MCF 10A (cell line): ENCODE measurements at regions of chr13 and their contacts with region 1.

Region 1: DNA sequence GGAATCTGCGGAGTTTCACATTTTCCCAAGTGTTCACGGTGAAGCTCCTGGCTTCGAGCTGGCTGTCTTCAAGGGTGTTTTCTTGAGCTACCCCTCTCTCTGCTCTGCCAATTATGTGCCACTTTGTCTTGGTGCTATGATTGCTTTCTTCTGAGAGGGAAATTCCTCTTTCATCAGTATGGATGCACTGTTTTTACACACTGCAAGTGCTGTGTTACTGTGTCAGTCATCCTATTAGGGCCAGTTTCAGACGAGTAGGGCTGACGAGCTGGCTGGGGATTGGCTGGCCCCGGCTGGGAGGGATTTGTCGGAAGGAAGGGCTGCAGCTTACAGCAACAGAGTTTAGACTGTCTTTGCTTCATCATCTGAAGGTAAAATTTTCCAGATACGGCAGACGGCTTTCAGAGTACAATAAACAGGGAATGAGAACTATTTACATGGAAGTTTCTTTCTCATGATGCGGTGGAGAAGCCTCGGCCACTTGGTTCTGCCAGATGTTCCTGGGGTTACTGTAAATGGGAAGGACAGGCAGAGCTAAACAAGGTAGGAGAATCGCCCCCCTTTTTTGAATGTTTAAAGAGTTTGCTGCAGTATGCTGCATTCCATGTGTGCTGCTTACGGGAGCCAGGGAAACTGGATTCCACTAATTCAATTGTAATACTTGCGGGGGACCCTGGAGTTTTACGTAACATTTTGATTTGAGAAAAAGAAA is at the start of gene MBNL2:
- DNase-seq: peak; percentile 97
- H3K4me3 Mint-ChIP-seq: peak within 1 kb of the TSS; percentile 91
- H3K27ac Mint-ChIP-seq: peak within 1 kb of the TSS; percentile 94
- H3K4me1 Mint-ChIP-seq: peaks cover 29% of the 10 kb centered on the region
- H3K27me3 Mint-ChIP-seq: no peaks in the 10 kb centered on the region
- CTCF ChIP-seq: no peak
- total RNA-seq, gene MBNL2: 74.3 and 85.8 TPM in 2 replicates

Region 2: DNA sequence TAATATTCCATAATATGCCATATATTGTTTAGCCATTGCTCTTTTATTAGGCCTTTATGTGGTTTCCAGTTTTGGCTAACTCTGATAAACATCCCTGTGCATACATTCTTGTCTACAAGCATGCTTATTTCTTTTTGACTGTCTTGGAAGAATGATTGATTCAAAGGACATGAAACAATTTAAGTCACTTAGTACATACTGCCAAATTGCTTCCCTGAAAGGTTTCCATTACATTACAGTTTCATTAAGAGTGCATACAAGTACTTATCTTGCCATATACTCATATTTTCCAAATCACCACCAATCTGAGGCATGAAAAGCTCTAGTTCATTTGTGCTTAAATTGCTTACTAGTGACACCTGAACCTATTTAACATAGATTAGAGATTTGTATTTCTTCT is 341.7 kb before region 1 on chr13:
- CTCF ChIA-PET with region 1: no interaction called
- POLR2A ChIA-PET with region 1: no interaction called
- intact Hi-C with region 1: no loop called
- DNase-seq: no peak
- H3K4me3 Mint-ChIP-seq: no peak overlapping the region
- H3K27ac Mint-ChIP-seq: no peak overlapping the region
- H3K4me1 Mint-ChIP-seq: no peaks in the 10 kb centered on the region
- H3K27me3 Mint-ChIP-seq: no peaks in the 10 kb centered on the region
- CTCF ChIP-seq: no peak

Region 3: DNA sequence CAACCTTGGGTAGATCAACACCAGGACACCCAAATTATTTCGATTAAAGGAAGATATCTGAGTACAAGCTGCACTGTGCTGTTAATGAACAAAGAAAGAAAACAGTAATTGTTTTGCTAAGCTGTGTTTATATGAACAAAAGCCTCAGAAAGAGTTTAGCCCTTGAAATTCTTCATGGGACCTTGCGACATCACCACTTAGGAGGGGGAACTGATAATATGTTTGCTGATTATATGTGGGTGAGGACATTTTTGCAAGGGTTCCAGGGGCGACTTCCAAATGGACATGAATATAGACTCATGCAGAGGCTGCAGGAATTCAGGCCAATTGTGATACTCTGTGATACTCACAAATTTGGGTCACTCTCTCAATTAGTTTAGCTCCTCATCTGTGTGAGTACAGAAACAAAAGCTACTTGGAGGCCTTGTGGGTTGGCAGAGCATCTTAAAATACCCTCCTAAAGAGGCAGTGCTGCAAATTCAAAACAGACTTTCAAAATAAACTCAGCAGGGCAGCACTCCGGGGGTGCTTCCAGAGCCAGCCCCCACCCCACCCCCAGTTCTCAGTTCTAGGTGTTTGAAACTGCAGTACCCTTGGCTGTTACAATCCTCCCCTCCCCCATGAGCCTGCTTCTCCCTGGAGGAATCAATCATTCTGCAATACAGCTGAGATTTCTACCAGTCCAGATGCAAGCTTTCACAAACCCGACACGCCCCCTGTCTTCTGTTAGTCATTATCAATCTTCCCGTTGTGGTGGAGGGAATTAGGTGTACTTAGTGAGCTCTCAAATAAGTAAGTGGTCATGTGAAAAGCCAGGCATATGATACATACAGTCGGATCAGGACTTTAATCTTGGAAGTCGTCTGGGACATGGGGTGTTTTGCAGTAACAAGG is 97.0 kb before region 1 on chr13:
- CTCF ChIA-PET with region 1: interaction called, 7 read pairs
- POLR2A ChIA-PET with region 1: interaction called, 58 read pairs
- intact Hi-C with region 1: no loop called
- DNase-seq: peak; percentile 89
- H3K4me3 Mint-ChIP-seq: peak overlapping the region; percentile 28
- H3K27ac Mint-ChIP-seq: peak overlapping the region; percentile 21
- H3K4me1 Mint-ChIP-seq: peaks cover 47% of the 10 kb centered on the region
- H3K27me3 Mint-ChIP-seq: no peaks in the 10 kb centered on the region
- CTCF ChIP-seq: no peak

Region 4: GRCh38 chr13:97235549-97236231 is 13.5 kb after region 1 on chr13:
- CTCF ChIA-PET with region 1: interaction called, 18 read pairs
- POLR2A ChIA-PET with region 1: interaction called, 63 read pairs
- intact Hi-C with region 1: no loop called
- DNase-seq: no peak
- H3K4me3 Mint-ChIP-seq: no peak overlapping the region
- H3K27ac Mint-ChIP-seq: no peak overlapping the region
- H3K4me1 Mint-ChIP-seq: peaks cover 22% of the 10 kb centered on the region
- H3K27me3 Mint-ChIP-seq: no peaks in the 10 kb centered on the region
- CTCF ChIP-seq: no peak

Region 5: GRCh38 chr13:97275265-97275664 is 53.1 kb after region 1 on chr13:
- CTCF ChIA-PET with region 1: interaction called, 28 read pairs
- POLR2A ChIA-PET with region 1: interaction called, 268 read pairs
- intact Hi-C with region 1: loop called (anchors 1 kb)
- DNase-seq: peak; percentile 95
- H3K4me3 Mint-ChIP-seq: peak overlapping the region; percentile 11
- H3K27ac Mint-ChIP-seq: peak overlapping the region; percentile 92
- H3K4me1 Mint-ChIP-seq: peaks cover 65% of the 10 kb centered on the region
- H3K27me3 Mint-ChIP-seq: no peaks in the 10 kb centered on the region
- CTCF ChIP-seq: no peak

Region 6: DNA sequence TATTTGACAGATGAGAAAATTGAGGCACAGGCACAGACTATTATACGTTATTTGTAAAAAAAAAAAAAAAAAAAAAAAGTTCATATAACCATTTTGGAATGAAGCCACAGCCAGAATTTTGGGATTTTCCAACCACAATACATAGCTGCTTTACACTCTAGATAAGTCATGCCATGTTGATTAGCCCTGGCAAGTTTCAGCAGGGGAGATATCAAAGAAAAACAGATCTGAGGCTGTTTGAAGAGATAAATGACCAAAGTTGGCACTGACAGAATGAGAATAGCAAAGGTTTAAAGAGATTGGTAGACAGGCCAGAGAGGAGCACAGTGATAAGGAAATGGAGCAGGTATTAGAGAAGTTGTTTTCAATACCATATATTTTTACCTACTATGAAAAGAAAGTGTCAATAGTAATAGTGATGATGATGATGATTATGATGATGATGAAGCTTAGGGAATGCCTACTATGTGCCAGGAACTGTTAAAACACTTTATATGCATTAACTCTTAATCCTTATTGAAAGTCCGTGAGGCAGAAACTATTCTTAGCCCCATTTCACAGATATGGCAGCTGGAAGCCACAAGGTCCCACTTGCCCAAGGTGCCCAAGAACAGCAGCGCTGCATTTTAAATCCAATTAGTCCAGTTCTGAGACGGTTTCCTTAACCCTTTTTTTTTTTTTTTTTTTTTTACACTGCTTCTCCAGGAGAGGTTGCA is 105.5 kb after region 1 on chr13:
- CTCF ChIA-PET with region 1: interaction called, 12 read pairs
- POLR2A ChIA-PET with region 1: interaction called, 14 read pairs
- intact Hi-C with region 1: no loop called
- DNase-seq: no peak
- H3K4me3 Mint-ChIP-seq: no peak overlapping the region
- H3K27ac Mint-ChIP-seq: no peak overlapping the region
- H3K4me1 Mint-ChIP-seq: peaks cover 23% of the 10 kb centered on the region
- H3K27me3 Mint-ChIP-seq: no peaks in the 10 kb centered on the region
- CTCF ChIP-seq: no peak

Region 7: DNA sequence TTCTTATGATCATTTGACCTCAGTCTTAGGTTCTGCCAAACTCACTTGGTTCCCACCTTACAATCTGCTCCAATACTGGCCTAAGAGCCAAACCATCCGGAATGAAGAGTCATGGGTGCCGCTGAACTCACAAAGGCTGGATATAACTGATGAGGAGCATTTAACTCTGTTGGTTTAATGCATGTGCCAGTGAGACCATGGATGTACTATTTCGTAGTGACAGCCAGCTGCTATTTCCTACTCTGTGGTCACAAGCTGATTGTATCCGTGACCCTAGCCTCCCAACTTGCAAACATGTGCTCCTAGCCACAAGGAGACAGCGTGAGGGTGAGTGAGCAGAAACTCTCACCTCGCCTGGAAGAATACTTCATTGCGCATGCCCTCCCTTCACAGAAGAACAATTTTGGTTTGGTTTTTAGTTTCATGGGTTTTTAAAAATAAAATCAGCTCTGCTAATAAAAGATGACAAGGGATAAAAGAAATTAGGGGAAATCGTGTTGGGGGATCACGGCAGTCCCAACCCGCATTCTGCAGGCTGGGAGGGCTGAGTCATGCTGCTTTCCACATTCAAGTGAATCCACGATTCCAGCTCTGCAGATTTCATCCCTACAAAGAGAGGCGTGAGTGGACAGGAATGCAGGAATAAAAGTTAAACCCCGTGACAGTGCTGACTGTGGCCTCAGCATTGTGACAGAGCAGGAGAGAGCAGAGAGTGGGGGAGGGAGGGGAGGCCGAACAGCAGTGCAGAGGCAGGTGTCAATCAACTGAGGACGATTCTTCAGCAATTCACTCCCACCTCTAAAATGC is 145.1 kb after region 1 on chr13:
- CTCF ChIA-PET with region 1: interaction called, 10 read pairs
- POLR2A ChIA-PET with region 1: interaction called, 51 read pairs
- intact Hi-C with region 1: no loop called
- DNase-seq: peak; percentile 18
- H3K4me3 Mint-ChIP-seq: no peak overlapping the region
- H3K27ac Mint-ChIP-seq: peak overlapping the region; percentile 62
- H3K4me1 Mint-ChIP-seq: peaks cover 6% of the 10 kb centered on the region
- H3K27me3 Mint-ChIP-seq: no peaks in the 10 kb centered on the region
- CTCF ChIP-seq: no peak

Region 8: DNA sequence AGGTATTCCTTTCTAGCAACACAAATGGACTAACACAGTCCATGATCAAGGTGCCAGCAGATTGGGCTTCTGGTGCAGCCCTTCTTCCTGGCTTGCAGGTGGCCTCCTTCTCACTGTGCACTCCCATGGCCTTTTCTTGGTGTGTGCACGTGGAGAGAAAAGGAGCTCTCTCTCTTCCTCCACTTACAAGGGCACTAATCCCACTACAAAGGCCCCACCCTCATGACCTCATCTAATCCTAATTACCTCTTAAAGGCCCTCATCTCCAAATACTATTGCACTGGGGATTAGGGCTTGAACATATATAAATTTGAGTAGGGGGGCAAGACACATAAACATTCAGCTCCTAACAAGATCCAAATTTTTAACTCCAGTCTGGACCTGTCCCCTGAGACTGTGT is 901.0 kb after region 1 on chr13:
- CTCF ChIA-PET with region 1: no interaction called
- POLR2A ChIA-PET with region 1: no interaction called
- intact Hi-C with region 1: no loop called
- DNase-seq: no peak
- H3K4me3 Mint-ChIP-seq: no peak overlapping the region
- H3K27ac Mint-ChIP-seq: no peak overlapping the region
- H3K4me1 Mint-ChIP-seq: no peaks in the 10 kb centered on the region
- H3K27me3 Mint-ChIP-seq: no peaks in the 10 kb centered on the region
- CTCF ChIP-seq: no peak